Heart right ventricle (tissue), 16 donors: ENCODE measurements at regions of chr18 and their contacts with region 1.

Region 1: DNA sequence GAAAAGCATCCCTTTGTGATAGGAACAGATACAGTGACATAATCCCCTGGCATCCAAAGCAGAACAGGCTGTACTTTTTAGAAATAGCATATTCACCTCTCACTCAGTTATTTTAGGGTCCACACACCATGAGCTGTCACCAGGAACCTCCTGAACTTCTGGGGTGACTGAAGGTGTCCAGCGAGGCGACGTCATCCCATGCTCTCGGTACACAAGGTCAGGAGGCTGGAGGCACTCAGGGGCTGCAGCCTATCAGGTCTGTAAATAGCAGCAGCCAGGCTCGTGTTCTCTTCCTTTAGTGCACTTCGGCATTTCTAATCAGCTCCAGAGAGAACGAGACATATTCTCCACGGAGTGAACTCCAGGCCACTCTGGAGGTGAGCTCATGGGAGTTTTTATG is 98.3 kb downstream of the GATA6 start:
- DNase-seq: peak; percentile 70 to 85
- ATAC-seq: peak; percentile 83 to 97 (median 92)
- H3K4me3 ChIP-seq: peak overlapping the region in 5 of 10 donors; percentile 44 to 52 (median 48)
- H3K27ac ChIP-seq: peak overlapping the region; percentile 78 to 95 (median 91)
- H3K4me1 ChIP-seq: peaks cover 0 to 41% (median 4%) of the 10 kb centered on the region in 9 donors
- H3K27me3 ChIP-seq: no peaks in the 10 kb centered on the region
- CTCF ChIP-seq: no peak

Region 2: DNA sequence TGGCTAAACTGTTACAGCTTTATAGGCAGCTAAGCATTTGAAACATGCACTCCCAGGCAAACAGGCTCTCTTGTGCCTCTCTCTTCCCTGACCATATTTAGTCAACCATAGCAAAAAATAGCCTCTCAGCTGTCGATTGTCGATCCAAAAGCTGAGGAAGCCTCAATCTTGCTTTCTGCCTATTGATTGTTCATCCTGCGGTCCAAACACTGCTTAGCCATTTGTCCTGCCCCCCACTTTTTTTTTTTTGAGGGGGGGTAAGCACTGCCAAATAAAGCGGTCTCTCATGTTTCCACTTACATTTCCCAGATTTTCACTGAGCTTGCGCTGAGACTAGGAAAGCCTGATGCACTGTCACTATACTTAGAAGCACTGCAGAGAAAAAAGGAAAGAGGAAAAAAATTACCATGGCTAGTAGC is 436.3 kb before region 1 on chr18:
- intact Hi-C with region 1: loop called in 1 of 10 experiments (anchors 5 kb)
- DNase-seq: peak in 1 of 2 donors; percentile 74
- ATAC-seq: peak; percentile 69 to 88 (median 82)
- H3K4me3 ChIP-seq: peak overlapping the region; percentile 27 to 62 (median 47)
- H3K27ac ChIP-seq: peak overlapping the region; percentile 24 to 85 (median 78)
- H3K4me1 ChIP-seq: peaks cover 0 to 18% (median 0%) of the 10 kb centered on the region in 9 donors
- H3K27me3 ChIP-seq: no peaks in the 10 kb centered on the region
- CTCF ChIP-seq: no peak

Region 3: GRCh38 chr18:22185273-22185672 is 82.4 kb before region 1 on chr18:
- intact Hi-C with region 1: loop called in 4 of 10 experiments (anchors 5 kb)
- DNase-seq: peak in 1 of 2 donors; percentile 46
- ATAC-seq: peak; percentile 36 to 76 (median 66)
- H3K4me3 ChIP-seq: no peak overlapping the region
- H3K27ac ChIP-seq: peak overlapping the region; percentile 66 to 99 (median 76)
- H3K4me1 ChIP-seq: peaks cover 21 to 100% (median 87%) of the 10 kb centered on the region in 9 donors
- H3K27me3 ChIP-seq: peaks cover 0 to 5% (median 0%) of the 10 kb centered on the region in 7 donors
- CTCF ChIP-seq: peak in 7 of 9 donors; percentile 21 to 56 (median 26)

Region 4: GRCh38 chr18:22214731-22215528 is 52.8 kb before region 1 on chr18:
- intact Hi-C with region 1: loop called in 2 of 10 experiments (anchors 5 kb)
- DNase-seq: no peak
- ATAC-seq: peak in 5 of 8 donors; percentile 15 to 59 (median 36)
- H3K4me3 ChIP-seq: no peak overlapping the region
- H3K27ac ChIP-seq: peak overlapping the region in 2 of 10 donors; percentile 13 to 26
- H3K4me1 ChIP-seq: peaks cover 0 to 56% (median 33%) of the 10 kb centered on the region in 9 donors
- H3K27me3 ChIP-seq: no peaks in the 10 kb centered on the region
- CTCF ChIP-seq: no peak

Region 5: GRCh38 chr18:22348521-22349316 is 81.0 kb after region 1 on chr18:
- intact Hi-C with region 1: loop called in 2 of 10 experiments (anchors 5 kb)
- DNase-seq: peak; percentile 68 to 81
- ATAC-seq: peak; percentile 67 to 79 (median 74)
- H3K4me3 ChIP-seq: peak overlapping the region; percentile 18 to 65 (median 58)
- H3K27ac ChIP-seq: peak overlapping the region; percentile 88 to 97 (median 94)
- H3K4me1 ChIP-seq: peaks cover 10 to 64% (median 44%) of the 10 kb centered on the region in 9 donors
- H3K27me3 ChIP-seq: peaks cover 0 to 45% (median 0%) of the 10 kb centered on the region in 7 donors
- CTCF ChIP-seq: peak in 1 of 9 donors; percentile 17

Region 6: GRCh38 chr18:22385718-22386117 is 118.0 kb after region 1 on chr18:
- intact Hi-C with region 1: loop called in 1 of 10 experiments (anchors 10 kb)
- DNase-seq: no peak
- ATAC-seq: no peak
- H3K4me3 ChIP-seq: no peak overlapping the region
- H3K27ac ChIP-seq: peak overlapping the region in 1 of 10 donors; percentile 8
- H3K4me1 ChIP-seq: peaks cover 0 to 11% (median 0%) of the 10 kb centered on the region in 9 donors
- H3K27me3 ChIP-seq: no peaks in the 10 kb centered on the region
- CTCF ChIP-seq: no peak

Region 7: GRCh38 chr18:22471546-22472131 is 203.9 kb after region 1 on chr18:
- intact Hi-C with region 1: loop called in 4 of 10 experiments (anchors 5 to 10 kb)
- DNase-seq: peak; percentile 51 to 82
- ATAC-seq: peak; percentile 83 to 95 (median 90)
- H3K4me3 ChIP-seq: no peak overlapping the region
- H3K27ac ChIP-seq: peak overlapping the region; percentile 77 to 92 (median 84)
- H3K4me1 ChIP-seq: peaks cover 21 to 56% (median 51%) of the 10 kb centered on the region in 9 donors
- H3K27me3 ChIP-seq: no peaks in the 10 kb centered on the region
- CTCF ChIP-seq: no peak

Region 8: GRCh38 chr18:22778996-22779395 is 511.3 kb after region 1 on chr18:
- intact Hi-C with region 1: no loop called
- DNase-seq: peak in 1 of 2 donors; percentile 61
- ATAC-seq: peak; percentile 79 to 97 (median 91)
- H3K4me3 ChIP-seq: no peak overlapping the region
- H3K27ac ChIP-seq: peak overlapping the region in 2 of 10 donors; percentile 37 to 45
- H3K4me1 ChIP-seq: peaks cover 0 to 12% (median 9%) of the 10 kb centered on the region in 9 donors
- H3K27me3 ChIP-seq: no peaks in the 10 kb centered on the region
- CTCF ChIP-seq: no peak